ENCODE measurements at regions of chr14 and their contacts with region 1.

Region 1: GRCh38 chr14:29548948-29549370 is 378.7 kb downstream of the PRKD1 start:
- DNase-seq: peak; percentile 60
- H3K4me3 ChIP-seq: no peak overlapping the region
- CTCF ChIP-seq: peak; percentile 42

Region 2: GRCh38 chr14:28756884-28757570 is 791.9 kb before region 1 on chr14:
- in situ Hi-C with region 1: loop called (anchors 5 kb)
- DNase-seq: peak; percentile 52
- H3K4me3 ChIP-seq: peak overlapping the region; percentile 30
- CTCF ChIP-seq: peak; percentile 90

Region 3: DNA sequence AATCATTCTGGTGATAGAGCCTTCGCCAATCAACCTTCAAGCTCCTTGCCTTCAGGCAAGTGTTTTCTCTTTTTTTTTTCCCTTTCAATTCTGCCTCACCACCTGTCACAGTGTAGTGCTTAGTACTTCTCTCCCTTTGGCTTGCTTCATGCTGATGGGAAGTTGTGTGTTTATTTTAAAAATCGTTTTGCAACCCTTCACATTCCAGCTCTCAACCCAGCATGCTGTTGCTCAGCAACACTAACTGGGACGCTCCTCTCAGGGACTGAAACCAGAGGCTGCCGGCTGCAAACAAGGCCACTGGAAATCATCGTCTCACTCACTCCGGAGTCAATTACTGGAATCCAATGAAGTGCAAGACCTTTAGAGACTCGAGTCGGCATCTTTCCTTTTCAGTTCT is 36.0 kb after region 1 on chr14:
- in situ Hi-C with region 1: no loop called
- DNase-seq: peak; percentile 70
- H3K4me3 ChIP-seq: no peak overlapping the region
- CTCF ChIP-seq: no peak

Region 4: DNA sequence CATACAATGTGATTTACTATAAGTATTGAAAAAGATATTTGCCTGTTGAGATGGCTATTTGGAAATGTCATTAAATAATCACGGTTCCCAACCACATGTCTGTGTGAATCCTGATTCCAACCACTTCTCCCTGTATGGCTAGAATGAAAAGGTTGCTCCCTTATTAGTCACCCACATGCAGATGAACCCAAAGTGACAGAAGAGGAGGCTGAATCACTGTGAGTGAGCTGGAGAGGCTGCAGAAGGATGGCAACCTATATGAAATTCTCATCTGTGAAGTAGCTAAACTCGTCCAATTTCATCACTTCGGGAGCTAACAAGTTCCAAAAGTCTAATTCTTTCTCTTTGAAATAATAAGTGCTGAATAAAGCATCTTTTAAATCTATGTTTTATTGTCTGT is 78.2 kb after region 1 on chr14:
- in situ Hi-C with region 1: no loop called
- DNase-seq: no peak
- H3K4me3 ChIP-seq: no peak overlapping the region
- CTCF ChIP-seq: no peak

Region 5: GRCh38 chr14:29927376-29928116 is 378.6 kb after region 1 on chr14 and contains the start of gene PRKD1:
- in situ Hi-C with region 1: no loop called
- DNase-seq: peak; percentile 37
- H3K4me3 ChIP-seq: peak within 1 kb of the TSS; percentile 89
- CTCF ChIP-seq: no peak

Region 6: GRCh38 chr14:30214461-30215090 is 665.6 kb after region 1 on chr14:
- in situ Hi-C with region 1: loop called (anchors 25 kb)
- DNase-seq: peak; percentile 76
- H3K4me3 ChIP-seq: no peak overlapping the region
- CTCF ChIP-seq: peak; percentile 64